PC-3 (cell line): ENCODE measurements at regions of chr5 and their contacts with region 1.

Region 1: GRCh38 chr5:147751156-147751825 is 31.2 kb downstream of the JAKMIP2 start:
- DNase-seq: no peak
- ATAC-seq: no peak
- H3K4me3 ChIP-seq: no peak overlapping the region
- H3K27ac ChIP-seq: no peak overlapping the region
- H3K4me1 ChIP-seq: no peaks in the 10 kb centered on the region
- H3K27me3 ChIP-seq: no peaks in the 10 kb centered on the region
- CTCF ChIP-seq: no peak

Region 2: GRCh38 chr5:147779694-147780093 is 28.4 kb after region 1 on chr5:
- CTCF ChIA-PET with region 1: no interaction called
- POLR2A ChIA-PET with region 1: interaction called, 12 read pairs
- intact Hi-C with region 1: no loop called
- DNase-seq: no peak
- ATAC-seq: no peak
- H3K4me3 ChIP-seq: no peak overlapping the region
- H3K27ac ChIP-seq: no peak overlapping the region
- H3K4me1 ChIP-seq: no peaks in the 10 kb centered on the region
- H3K27me3 ChIP-seq: no peaks in the 10 kb centered on the region
- CTCF ChIP-seq: no peak

Region 3: GRCh38 chr5:147918101-147918685 is 166.9 kb after region 1 on chr5:
- CTCF ChIA-PET with region 1: no interaction called
- POLR2A ChIA-PET with region 1: no interaction called
- intact Hi-C with region 1: no loop called
- DNase-seq: peak; percentile 94
- ATAC-seq: peak; percentile 73
- H3K4me3 ChIP-seq: peak overlapping the region; percentile 52; the same call in 1 of the 2 replicates
- H3K27ac ChIP-seq: peak overlapping the region; percentile 97
- H3K4me1 ChIP-seq: peaks cover 72% of the 10 kb centered on the region
- H3K27me3 ChIP-seq: no peaks in the 10 kb centered on the region
- CTCF ChIP-seq: no peak